K562 (cell line): ENCODE measurements at regions of chr3 and their contacts with region 1.

Region 1: DNA sequence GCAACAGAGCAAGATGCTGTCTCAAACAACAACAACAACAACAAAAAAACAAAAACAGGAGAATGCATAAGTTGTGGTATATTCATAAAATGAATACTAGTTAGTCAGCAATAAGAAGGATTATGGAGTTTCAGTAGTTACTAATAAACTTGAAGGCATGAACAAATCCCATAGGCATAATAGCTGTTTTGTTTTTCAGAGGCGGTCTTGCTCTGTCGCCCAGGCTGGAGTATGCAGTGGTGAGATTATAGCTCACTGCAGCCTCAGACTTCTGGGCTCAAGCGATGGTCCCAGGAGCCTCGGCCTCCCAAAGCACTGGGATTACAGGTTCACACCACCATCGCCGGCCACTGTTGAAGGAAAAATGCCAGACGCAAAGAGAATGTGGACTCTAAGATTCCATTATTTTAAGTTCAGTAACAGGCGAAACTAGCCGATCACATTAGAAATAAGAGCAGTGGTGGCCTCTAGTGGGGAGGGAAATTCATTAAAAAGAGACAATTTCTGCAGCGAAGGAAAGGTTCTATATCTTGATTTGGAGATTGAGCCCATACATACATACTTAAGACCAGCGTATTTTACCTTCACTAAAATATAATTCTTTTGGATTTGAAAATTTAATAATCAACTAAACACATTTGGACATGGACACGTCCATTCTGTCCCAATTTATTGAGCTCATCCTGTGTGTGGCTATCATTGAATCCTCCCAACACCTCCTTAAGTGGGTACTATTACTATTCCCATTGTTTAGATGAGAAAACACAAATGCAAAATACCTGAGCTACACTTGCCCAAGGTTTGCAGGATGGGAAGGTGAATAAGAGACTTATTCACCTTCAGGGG is 27.4 kb upstream of the HDAC11 start:
- DNase-seq: peak; percentile 58 to 80 (median 61)
- ATAC-seq: peak; percentile 59
- H3K4me3 ChIP-seq: peak overlapping the region; percentile 43
- H3K27ac ChIP-seq: peak overlapping the region; percentile 39; the same call in 1 of the 3 replicates
- H3K4me1 ChIP-seq: peaks cover 16 to 24% of the 10 kb centered on the region in 2 experiments; a peak in 4 of 5 replicates
- H3K27me3 ChIP-seq: no peaks in the 10 kb centered on the region
- CTCF ChIP-seq: peak; percentile 62 to 92 (median 83)
- EP300 ChIP-seq: no peak
- POLR2A ChIP-seq: no peak
- RAD21 ChIP-seq: peak; percentile 87 to 90

Region 2: DNA sequence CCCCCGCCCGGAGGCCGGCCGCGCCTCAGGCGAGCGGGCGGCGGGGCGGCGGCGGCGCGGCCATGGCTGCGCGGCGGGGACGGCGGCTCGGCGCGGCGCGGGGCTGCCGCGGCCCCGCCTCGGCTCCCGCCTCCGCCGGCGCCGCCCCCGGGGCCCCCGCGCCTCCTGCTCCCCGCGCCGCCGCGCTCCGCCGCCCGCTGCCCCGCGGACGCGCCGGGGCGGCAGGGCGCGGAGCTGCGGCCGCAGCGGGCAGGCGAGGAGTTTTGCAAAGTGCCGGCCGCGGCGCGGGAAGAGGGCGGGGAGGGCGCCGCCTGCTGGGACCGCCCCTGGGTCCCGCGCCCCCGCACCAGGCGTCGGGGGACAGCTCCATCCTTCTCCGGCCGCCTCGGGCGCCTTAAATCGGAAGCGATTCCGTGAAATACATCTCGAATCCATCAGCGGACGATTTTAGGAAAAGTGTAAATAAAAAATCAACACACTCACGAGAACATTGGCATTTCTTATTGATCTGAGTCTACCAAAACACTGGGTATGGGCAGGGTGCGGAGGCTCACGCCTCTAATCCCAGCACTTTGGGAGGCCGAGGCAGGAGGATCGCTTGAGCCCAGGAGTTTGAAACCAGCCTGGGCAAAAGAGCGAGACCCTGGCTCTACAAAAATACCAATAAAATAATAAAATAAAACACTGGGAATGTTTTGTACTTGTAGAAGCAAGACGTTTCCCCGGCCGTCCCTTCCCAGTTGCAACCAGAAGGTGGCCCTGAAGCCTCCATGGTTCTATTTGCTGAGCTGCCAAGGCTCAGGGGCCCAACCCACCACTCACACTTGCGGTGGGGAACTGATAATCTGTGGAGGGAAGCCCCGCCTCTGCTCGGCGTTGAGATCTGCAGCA is 169.5 kb before region 1 on chr3:
- CTCF ChIA-PET with region 1: no interaction called
- POLR2A ChIA-PET with region 1: no interaction called
- in situ Hi-C with region 1: no loop called
- intact Hi-C with region 1: loop called (anchors 1 kb)
- DNase-seq: peak; percentile 88 to 93 (median 91)
- ATAC-seq: peak; percentile 96
- H3K4me3 ChIP-seq: peak overlapping the region; percentile 34
- H3K27ac ChIP-seq: no peak overlapping the region
- H3K4me1 ChIP-seq: peaks cover 6 to 27% of the 10 kb centered on the region in 2 experiments; a peak in 4 of 5 replicates
- H3K27me3 ChIP-seq: peaks cover 13 to 52% of the 10 kb centered on the region in 2 experiments; a peak in 4 of 5 replicates
- CTCF ChIP-seq: peak; percentile 62 to 76 (median 67)
- EP300 ChIP-seq: no peak
- POLR2A ChIP-seq: no peak
- RAD21 ChIP-seq: peak in 1 of 2 experiments; percentile 63; a peak in 2 of 4 replicates

Region 3: GRCh38 chr3:13303419-13303818 is 149.3 kb before region 1 on chr3:
- CTCF ChIA-PET with region 1: no interaction called
- POLR2A ChIA-PET with region 1: no interaction called
- in situ Hi-C with region 1: no loop called
- intact Hi-C with region 1: loop called (anchors 2 kb)
- DNase-seq: peak in 1 of 4 experiments; percentile 22
- ATAC-seq: no peak
- H3K4me3 ChIP-seq: no peak overlapping the region
- H3K27ac ChIP-seq: no peak overlapping the region
- H3K4me1 ChIP-seq: peaks cover 0 to 3% of the 10 kb centered on the region in 2 experiments; a peak in 1 of 5 replicates
- H3K27me3 ChIP-seq: peaks cover 42 to 86% of the 10 kb centered on the region in 2 experiments
- CTCF ChIP-seq: no peak
- EP300 ChIP-seq: no peak
- POLR2A ChIP-seq: no peak
- RAD21 ChIP-seq: no peak

Region 4: DNA sequence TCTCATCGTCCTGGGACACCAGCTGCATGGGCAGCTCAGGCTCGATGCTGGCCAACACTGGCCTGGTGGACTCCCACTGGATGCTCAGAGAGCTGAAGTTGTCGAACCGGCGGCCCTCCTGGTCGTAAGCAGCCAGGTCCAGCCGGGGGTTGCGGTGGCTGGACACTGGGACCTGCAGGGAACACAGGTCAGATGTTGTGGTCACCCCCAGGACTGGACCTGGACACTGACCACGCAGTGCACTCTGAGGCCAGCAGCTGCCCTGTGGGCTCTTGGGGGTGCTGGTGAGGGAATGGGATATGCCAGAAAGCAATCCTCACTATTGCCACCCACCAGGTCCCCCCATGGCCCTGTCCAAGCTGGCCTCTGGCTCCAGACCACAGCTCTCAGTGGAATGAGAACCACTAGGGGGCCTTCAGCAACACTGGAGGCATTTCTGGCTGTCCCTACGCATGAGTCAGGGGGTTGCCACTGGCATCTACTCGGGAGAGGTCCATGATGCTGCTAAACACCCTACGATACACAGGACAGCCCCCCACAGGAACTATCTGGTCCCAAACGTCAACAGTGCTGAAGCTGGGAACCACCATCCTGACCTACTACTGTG is 98.7 kb before region 1 on chr3:
- CTCF ChIA-PET with region 1: interaction called, 4 read pairs
- POLR2A ChIA-PET with region 1: interaction called, 3 read pairs
- in situ Hi-C with region 1: no loop called
- intact Hi-C with region 1: loop called (anchors 5 kb)
- DNase-seq: peak; percentile 40 to 60 (median 47)
- ATAC-seq: peak; percentile 65
- H3K4me3 ChIP-seq: no peak overlapping the region
- H3K27ac ChIP-seq: peak overlapping the region; percentile 90; the same call in 2 of the 3 replicates
- H3K4me1 ChIP-seq: peaks cover 18 to 28% of the 10 kb centered on the region in 2 experiments
- H3K27me3 ChIP-seq: no peaks in the 10 kb centered on the region
- CTCF ChIP-seq: peak; percentile 31 to 63 (median 47)
- EP300 ChIP-seq: no peak
- POLR2A ChIP-seq: no peak
- RAD21 ChIP-seq: peak in 1 of 2 experiments; percentile 31; a peak in 1 of 4 replicates

Region 5: DNA sequence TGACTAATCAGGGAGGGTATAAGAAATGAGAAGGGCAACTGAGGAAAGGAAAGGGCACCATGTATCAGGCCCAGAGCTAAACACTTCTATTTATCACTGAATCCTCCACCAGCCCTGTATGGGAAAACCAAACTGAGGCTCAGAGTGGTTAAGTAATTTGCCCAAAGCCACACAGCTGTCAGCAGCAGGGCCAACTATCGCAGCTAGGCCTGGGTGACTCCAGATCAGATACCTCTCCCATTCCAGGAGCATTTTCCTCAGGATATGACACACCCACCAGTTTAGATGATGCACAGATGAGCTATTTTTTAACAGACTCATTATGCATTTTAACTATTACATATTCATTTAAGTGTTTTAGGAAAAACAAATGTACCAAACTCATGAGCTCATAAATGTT is 47.1 kb before region 1 on chr3:
- CTCF ChIA-PET with region 1: no interaction called
- POLR2A ChIA-PET with region 1: interaction called, 4 read pairs
- in situ Hi-C with region 1: no loop called
- intact Hi-C with region 1: loop called (anchors 2 kb)
- DNase-seq: peak in 1 of 4 experiments; percentile 48
- ATAC-seq: no peak
- H3K4me3 ChIP-seq: no peak overlapping the region
- H3K27ac ChIP-seq: peak overlapping the region; percentile 8; the same call in 1 of the 3 replicates
- H3K4me1 ChIP-seq: peaks cover 32 to 42% of the 10 kb centered on the region in 2 experiments; a peak in 4 of 5 replicates
- H3K27me3 ChIP-seq: no peaks in the 10 kb centered on the region
- CTCF ChIP-seq: no peak
- EP300 ChIP-seq: no peak
- POLR2A ChIP-seq: no peak
- RAD21 ChIP-seq: no peak

Region 6: DNA sequence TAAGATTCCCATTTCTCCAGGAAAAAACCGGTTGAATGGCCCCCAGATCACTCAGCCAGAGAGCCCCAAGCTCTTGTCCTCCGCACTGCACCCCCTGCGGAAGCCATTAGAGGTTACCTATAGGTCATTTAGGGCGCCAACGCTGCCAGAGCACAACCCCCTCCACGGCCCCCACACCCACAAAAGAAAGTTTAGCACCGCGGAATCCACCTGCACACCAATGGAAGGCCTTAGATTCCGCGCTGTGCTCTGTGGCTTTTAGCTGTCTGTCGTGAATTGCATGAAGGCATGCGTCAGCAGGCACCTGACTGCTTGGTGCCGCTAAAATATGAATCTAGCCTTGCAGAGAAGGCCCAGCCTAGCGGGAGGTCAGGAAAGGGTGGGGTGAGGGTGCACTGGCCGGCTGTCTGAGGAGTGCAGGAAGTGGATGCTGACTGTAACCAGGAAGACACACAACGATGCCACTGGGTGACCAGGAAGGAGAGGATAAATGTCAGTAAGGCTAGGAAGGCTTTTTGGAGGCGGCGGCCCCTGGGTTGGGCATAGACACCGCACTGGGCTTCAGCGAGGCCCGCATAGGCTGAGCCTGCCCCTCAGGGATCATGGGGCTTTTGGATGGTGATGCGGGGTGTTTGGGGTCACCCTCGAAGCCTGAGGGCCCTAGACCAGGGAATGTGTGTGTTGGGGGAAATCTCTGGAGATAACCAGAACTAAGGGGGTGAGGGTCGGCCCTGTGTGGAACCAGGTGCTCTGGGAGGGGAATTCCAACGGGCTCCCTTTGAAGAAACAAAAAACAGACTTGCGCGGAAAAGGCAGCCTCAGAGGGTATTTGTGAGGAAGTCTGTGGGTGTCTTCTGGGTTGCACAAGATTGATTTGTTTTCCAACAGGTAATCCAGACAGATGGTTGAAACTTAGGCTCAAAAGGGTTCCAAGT is 31.6 kb before region 1 on chr3:
- CTCF ChIA-PET with region 1: interaction called, 3 read pairs
- POLR2A ChIA-PET with region 1: interaction called, 6 read pairs
- in situ Hi-C with region 1: no loop called
- intact Hi-C with region 1: loop called (anchors 1 kb)
- DNase-seq: peak; percentile 68 to 91 (median 78)
- ATAC-seq: peak; percentile 74
- H3K4me3 ChIP-seq: peak overlapping the region; percentile 62
- H3K27ac ChIP-seq: peak overlapping the region; percentile 91
- H3K4me1 ChIP-seq: peaks cover 41 to 50% of the 10 kb centered on the region in 2 experiments
- H3K27me3 ChIP-seq: no peaks in the 10 kb centered on the region
- CTCF ChIP-seq: no peak
- EP300 ChIP-seq: peak; percentile 7; the same call in 1 of the 2 replicates
- POLR2A ChIP-seq: peak; percentile 73
- RAD21 ChIP-seq: no peak

Region 7: DNA sequence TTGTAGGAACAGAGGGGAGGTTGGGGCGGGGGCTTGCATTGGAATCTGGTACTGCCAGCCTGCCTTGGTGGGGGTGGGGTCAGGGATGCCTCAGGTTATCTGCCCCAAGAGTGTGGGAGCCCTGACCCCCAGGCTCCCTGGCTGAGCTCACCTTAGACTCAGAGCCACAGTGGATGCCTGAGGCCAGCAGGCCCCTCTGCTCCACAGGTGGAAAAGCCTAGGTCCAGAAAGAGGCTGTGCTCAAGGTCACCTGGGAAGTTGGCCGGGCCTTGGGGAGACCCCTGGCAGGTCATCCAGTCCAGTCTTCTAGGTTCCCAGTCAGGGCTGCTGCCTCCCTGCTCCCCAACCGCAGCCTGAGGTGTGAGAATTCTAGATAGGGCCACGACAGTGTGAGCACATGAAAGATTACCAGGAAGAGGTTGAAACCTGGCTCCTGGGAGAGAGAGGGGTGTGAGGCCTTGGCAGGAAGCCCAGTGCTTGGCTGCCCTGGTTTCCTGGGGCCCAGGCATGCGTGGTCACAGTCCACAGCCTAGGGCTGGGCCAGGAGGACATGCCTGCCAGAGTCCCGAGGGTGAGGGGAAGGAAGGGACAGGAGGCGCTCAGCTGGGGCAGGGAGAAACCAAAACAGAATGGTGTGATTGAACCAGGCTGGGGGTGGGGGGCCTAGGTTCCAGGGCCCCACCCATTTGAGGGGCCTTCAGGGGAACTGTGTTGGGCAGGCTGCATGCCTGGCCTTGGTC is 32.3 kb after region 1 on chr3:
- CTCF ChIA-PET with region 1: no interaction called
- POLR2A ChIA-PET with region 1: interaction called, 10 read pairs
- in situ Hi-C with region 1: no loop called
- intact Hi-C with region 1: no loop called
- DNase-seq: peak; percentile 92 to 98 (median 94)
- ATAC-seq: peak; percentile 90
- H3K4me3 ChIP-seq: no peak overlapping the region
- H3K27ac ChIP-seq: peak overlapping the region; percentile 60
- H3K4me1 ChIP-seq: peaks cover 21 to 49% of the 10 kb centered on the region in 2 experiments
- H3K27me3 ChIP-seq: no peaks in the 10 kb centered on the region
- CTCF ChIP-seq: no peak
- EP300 ChIP-seq: peak; percentile 94
- POLR2A ChIP-seq: 0 out of 2 replicates have a peak, but pooled peaks have one; percentile 30
- RAD21 ChIP-seq: no peak

Region 8: GRCh38 chr3:13770170-13771169 is 317.8 kb after region 1 on chr3:
- CTCF ChIA-PET with region 1: no interaction called
- POLR2A ChIA-PET with region 1: no interaction called
- in situ Hi-C with region 1: no loop called
- intact Hi-C with region 1: no loop called
- DNase-seq: no peak
- ATAC-seq: peak; percentile 36
- H3K4me3 ChIP-seq: no peak overlapping the region
- H3K27ac ChIP-seq: no peak overlapping the region
- H3K4me1 ChIP-seq: no peaks in the 10 kb centered on the region
- H3K27me3 ChIP-seq: peaks cover 4 to 66% of the 10 kb centered on the region in 2 experiments; a peak in 4 of 5 replicates
- CTCF ChIP-seq: no peak
- EP300 ChIP-seq: no peak
- POLR2A ChIP-seq: no peak
- RAD21 ChIP-seq: no peak